Left ventricle myocardium superior (tissue), 1 donor: ENCODE measurements at regions of chr16 and their contacts with region 1.

Region 1: GRCh38 chr16:72938795-72939164 is 109.1 kb downstream of the ZFHX3 start:
- DNase-seq: peak; percentile 96
- ATAC-seq: peak; percentile 95

Region 2: GRCh38 chr16:72277749-72278148 is 661.0 kb before region 1 on chr16:
- intact Hi-C with region 1: no loop called
- DNase-seq: no peak
- ATAC-seq: no peak

Region 3: GRCh38 chr16:72856797-72857196 is 82.0 kb before region 1 on chr16:
- intact Hi-C with region 1: loop called (anchors 10 kb)
- DNase-seq: no peak
- ATAC-seq: no peak

Region 4: DNA sequence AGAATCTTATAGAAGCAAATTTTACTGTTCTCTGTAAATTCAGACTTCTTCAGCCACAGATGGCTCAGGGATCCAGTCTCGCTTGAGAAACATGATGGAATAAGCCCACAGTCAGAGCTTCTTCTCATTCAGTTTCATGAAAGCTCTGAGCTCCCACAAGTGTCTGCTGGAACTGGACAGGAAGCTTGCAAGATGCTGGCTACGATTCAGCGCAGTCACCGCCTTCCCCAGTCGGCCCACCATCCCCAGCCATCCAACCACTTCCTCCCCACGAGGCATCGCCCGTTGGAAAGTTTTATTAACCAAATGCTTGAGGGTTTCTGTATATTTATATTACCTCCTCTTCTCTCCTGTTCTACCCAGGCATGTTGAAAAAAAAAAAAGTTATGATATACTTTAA is 62.6 kb before region 1 on chr16:
- intact Hi-C with region 1: no loop called
- DNase-seq: peak; percentile 74
- ATAC-seq: peak; percentile 83